Breast epithelium (tissue), 4 donors: ENCODE measurements at regions of chr5 and their contacts with region 1.

Region 1: GRCh38 chr5:129884322-129884721 is 19.9 kb upstream of the CHSY3 start:
- DNase-seq: no peak
- H3K4me3 ChIP-seq: no peak overlapping the region
- H3K27ac ChIP-seq: no peak overlapping the region
- H3K4me1 ChIP-seq: no peaks in the 10 kb centered on the region
- H3K27me3 ChIP-seq: no peaks in the 10 kb centered on the region
- CTCF ChIP-seq: no peak
- POLR2A ChIP-seq: no peak

Region 2: GRCh38 chr5:131064669-131065371 is 1180.5 kb after region 1 on chr5:
- intact Hi-C with region 1: loop called (anchors 5 kb)
- DNase-seq: no peak
- H3K4me3 ChIP-seq: no peak overlapping the region
- H3K27ac ChIP-seq: no peak overlapping the region
- H3K4me1 ChIP-seq: no peaks in the 10 kb centered on the region
- H3K27me3 ChIP-seq: no peaks in the 10 kb centered on the region
- CTCF ChIP-seq: no peak
- POLR2A ChIP-seq: no peak